ENCODE measurements at regions of chr7 and their contacts with region 1.

Region 1: DNA sequence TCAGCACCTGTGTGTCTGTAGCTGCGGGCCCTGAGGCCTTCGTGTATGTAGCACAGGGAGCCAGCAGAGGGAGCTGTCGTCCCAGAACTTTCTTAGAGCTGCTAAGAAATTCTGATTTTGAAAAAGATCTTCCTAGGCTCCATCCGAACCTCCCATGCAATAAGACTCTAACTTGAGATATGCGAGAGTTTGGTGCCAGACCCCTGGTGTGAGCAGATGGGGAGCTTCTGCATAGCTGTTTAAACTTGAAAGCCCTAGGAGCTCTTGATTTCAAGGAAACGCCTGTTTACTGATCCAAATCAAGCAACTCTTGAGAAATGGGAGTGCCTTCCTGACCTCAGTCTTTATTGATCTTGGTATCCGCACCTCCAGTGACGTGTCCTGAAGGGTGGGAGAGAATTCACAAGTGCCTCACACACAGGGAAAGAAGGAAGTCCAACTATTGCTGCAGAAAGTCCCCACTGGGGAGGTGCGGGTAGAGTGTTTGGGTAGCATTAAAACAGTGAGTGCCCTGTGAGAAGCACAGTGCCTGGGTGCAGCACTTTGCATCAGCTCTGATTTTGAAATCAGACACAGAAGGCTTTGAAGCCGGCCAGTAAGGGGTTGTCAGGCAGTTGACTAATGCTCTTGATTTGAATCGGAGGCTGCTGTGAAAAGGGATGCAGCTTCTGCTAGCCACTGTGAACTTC is 66.4 kb upstream of the STRIP2 start:
- DNase-seq: peak; percentile 25 to 71 (median 60)
- ATAC-seq: peak; percentile 85
- H3K4me3 ChIP-seq: peak overlapping the region; percentile 10
- H3K4me3 Mint-ChIP-seq: peak overlapping the region in 8 of 10 donors; percentile 12 to 88 (median 34)
- H3K27ac ChIP-seq: no peak overlapping the region
- H3K27ac Mint-ChIP-seq: peak overlapping the region in 5 of 9 donors; percentile 10 to 91 (median 25)
- H3K4me1 ChIP-seq: peaks cover 8% of the 10 kb centered on the region in 2 donors
- H3K4me1 Mint-ChIP-seq: peaks cover 10 to 48% (median 16%) of the 10 kb centered on the region in 7 donors
- H3K27me3 ChIP-seq: no peaks in the 10 kb centered on the region
- H3K27me3 Mint-ChIP-seq: no peaks in the 10 kb centered on the region

Region 2: DNA sequence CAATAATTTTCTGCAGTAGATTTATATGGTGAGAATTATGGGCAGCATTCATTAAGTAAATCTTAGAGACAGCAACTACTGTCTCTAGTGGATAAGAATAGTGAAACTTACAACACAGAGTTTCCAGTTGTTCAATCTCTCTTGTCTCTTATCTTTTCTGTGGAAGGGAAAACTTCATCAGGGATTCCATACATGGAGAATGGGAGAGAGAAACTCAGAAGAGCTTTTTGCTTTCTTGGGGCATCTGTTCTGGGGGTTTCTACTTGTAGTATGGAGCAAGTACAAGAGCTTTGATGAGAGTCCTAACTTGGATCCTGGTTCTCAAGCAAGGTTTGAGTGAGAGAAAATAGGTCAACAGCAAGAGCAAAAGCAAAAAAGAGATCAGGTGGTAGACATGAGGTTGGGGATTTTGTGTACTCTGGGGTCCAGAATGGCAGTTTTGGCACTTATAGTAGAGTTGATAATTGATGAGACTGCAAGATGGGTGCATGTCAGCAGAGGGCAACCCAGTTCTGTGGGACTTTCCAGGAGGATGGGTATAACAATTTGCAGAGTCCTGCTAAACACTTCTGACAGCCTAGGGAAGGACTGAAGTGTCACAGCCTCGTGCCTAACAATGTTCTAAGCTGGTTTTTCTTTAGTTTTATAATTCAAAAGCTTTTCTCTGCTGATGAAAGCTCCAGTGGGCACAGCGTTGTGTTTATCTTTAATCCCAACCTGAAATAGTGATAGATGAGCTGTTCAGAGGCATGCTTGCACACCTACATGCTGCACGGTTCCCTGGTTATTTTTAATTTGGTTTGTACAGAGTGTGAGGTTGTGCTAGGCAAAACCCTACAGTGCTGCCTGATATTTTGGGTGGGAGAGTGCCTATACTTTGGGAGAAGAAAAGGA is 34.4 kb after region 1 on chr7:
- CTCF ChIA-PET with region 1: interaction called, 5 read pairs
- POLR2A ChIA-PET with region 1: interaction called, 3 read pairs
- intact Hi-C with region 1: loop called in 1 of 2 experiments (anchors 5 kb)
- DNase-seq: no peak
- ATAC-seq: no peak
- H3K4me3 ChIP-seq: no peak overlapping the region
- H3K4me3 Mint-ChIP-seq: no peak overlapping the region
- H3K27ac ChIP-seq: no peak overlapping the region
- H3K27ac Mint-ChIP-seq: peak overlapping the region in 1 of 9 donors; percentile 0
- H3K4me1 ChIP-seq: no peaks in the 10 kb centered on the region
- H3K4me1 Mint-ChIP-seq: peaks cover 0 to 16% (median 0%) of the 10 kb centered on the region in 7 donors
- H3K27me3 ChIP-seq: no peaks in the 10 kb centered on the region
- H3K27me3 Mint-ChIP-seq: no peaks in the 10 kb centered on the region

Region 3: GRCh38 chr7:129611246-129612111 is 243.6 kb after region 1 on chr7 and contains the start of gene NRF1:
- CTCF ChIA-PET with region 1: no interaction called
- POLR2A ChIA-PET with region 1: no interaction called
- intact Hi-C with region 1: loop called in 1 of 2 experiments (anchors 2 kb)
- DNase-seq: peak; percentile 89 to 97 (median 94)
- ATAC-seq: peak; percentile 92
- H3K4me3 ChIP-seq: peak within 1 kb of the TSS; percentile 87
- H3K4me3 Mint-ChIP-seq: peak within 1 kb of the TSS; percentile 88 to 99 (median 96)
- H3K27ac ChIP-seq: peak within 1 kb of the TSS; percentile 82
- H3K27ac Mint-ChIP-seq: peak within 1 kb of the TSS; percentile 92 to 99 (median 96)
- H3K4me1 ChIP-seq: peaks cover 24 to 38% of the 10 kb centered on the region in 2 donors
- H3K4me1 Mint-ChIP-seq: peaks cover 37 to 79% (median 67%) of the 10 kb centered on the region in 7 donors
- H3K27me3 ChIP-seq: no peaks in the 10 kb centered on the region
- H3K27me3 Mint-ChIP-seq: no peaks in the 10 kb centered on the region
- total RNA-seq, gene NRF1: 25.8 to 49.3 (median 35.3) TPM

Region 4: DNA sequence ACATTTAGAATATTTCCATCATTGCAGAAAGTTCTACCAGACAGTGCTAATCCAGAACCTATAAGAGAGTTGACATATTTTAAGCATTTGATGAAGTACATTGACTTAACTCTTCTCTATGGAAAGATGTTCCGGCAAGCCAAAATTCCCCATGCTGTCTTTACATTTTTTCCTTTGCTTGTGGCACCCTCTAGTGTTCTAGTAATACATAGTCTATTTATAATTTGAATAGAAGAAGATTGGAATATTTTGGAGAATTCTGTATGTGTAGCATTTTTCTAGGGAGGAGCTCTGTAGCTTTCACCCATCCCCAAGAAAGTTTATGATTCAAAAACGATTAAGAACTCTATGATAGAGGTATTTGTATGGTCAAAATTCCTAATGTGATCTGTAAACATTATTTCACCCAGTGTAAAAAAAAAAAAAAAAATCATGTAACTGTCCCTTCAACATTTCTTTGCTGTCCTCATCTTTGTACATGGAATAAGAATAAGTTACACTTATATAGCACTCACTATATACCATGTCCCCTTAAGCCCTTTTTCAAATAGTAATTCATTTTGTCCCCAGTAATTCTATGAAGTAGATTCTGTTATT is 276.9 kb after region 1 on chr7:
- CTCF ChIA-PET with region 1: interaction called, 18 read pairs
- POLR2A ChIA-PET with region 1: no interaction called
- intact Hi-C with region 1: loop called in 1 of 2 experiments (anchors 1 kb)
- DNase-seq: peak in 3 of 9 donors; percentile 1 to 25 (median 12)
- ATAC-seq: peak; percentile 37
- H3K4me3 ChIP-seq: no peak overlapping the region
- H3K4me3 Mint-ChIP-seq: no peak overlapping the region
- H3K27ac ChIP-seq: no peak overlapping the region
- H3K27ac Mint-ChIP-seq: peak overlapping the region in 1 of 9 donors; percentile 6
- H3K4me1 ChIP-seq: peaks cover 0 to 3% of the 10 kb centered on the region in 2 donors
- H3K4me1 Mint-ChIP-seq: peaks cover 5 to 61% (median 36%) of the 10 kb centered on the region in 7 donors
- H3K27me3 ChIP-seq: no peaks in the 10 kb centered on the region
- H3K27me3 Mint-ChIP-seq: no peaks in the 10 kb centered on the region